GM12878 (cell line): ENCODE measurements at regions of chr11 and their contacts with region 1.

Region 1: DNA sequence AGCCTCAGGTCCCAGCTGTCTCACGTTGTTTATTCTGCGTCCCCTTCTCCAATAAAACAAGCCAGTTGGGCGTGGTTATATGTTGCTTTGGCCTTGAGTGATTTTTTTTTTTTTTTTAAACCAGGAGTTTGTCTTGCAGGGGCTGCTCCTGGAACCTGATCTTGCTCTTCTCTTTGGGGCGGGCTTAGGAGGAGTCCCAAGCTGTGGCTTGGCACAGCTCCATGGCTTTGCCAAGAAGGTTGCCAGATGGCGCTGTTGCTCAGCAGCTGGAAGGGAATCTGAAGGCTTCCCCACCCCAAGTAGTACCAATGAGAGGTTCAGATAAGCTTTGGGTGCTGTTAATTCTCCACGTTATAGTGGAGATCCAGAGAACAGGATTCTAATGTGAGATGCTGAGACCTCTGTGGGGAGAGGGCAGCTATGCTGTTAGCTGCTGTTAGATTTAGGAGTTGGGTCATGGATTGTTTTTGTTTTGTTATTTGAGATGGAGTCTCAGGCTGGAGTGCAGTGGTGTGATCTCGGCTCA is 2.0 kb upstream of the FERMT3 start:
- DNase-seq: peak; percentile 52
- ATAC-seq: peak; percentile 43
- H3K4me3 ChIP-seq: no peak overlapping the region
- H3K27ac ChIP-seq: peak overlapping the region; percentile 3; the same call in 1 of the 2 replicates
- H3K4me1 ChIP-seq: peaks cover 26% of the 10 kb centered on the region
- H3K27me3 ChIP-seq: no peaks in the 10 kb centered on the region
- CTCF ChIP-seq: peak; percentile 73 to 92 (median 77)
- EP300 ChIP-seq: no peak
- POLR2A ChIP-seq: peak; percentile 34; the same call in 1 of the 2 replicates
- RAD21 ChIP-seq: peak; percentile 82

Region 2: GRCh38 chr11:64216879-64217278 is 12.4 kb after region 1 on chr11:
- CTCF ChIA-PET with region 1: interaction called, 14 read pairs
- POLR2A ChIA-PET with region 1: interaction called, 21 read pairs
- RAD21 ChIA-PET with region 1: interaction called, 6 read pairs
- SMC1A ChIA-PET with region 1: interaction called, 8 read pairs
- in situ Hi-C with region 1: no loop called
- intact Hi-C with region 1: no loop called
- DNase-seq: no peak
- ATAC-seq: peak; percentile 25; the same call in 1 of the 3 replicates
- H3K4me3 ChIP-seq: no peak overlapping the region
- H3K27ac ChIP-seq: no peak overlapping the region
- H3K4me1 ChIP-seq: no peaks in the 10 kb centered on the region; the same call in 1 of the 2 replicates
- H3K27me3 ChIP-seq: no peaks in the 10 kb centered on the region
- CTCF ChIP-seq: no peak
- EP300 ChIP-seq: no peak
- POLR2A ChIP-seq: no peak
- RAD21 ChIP-seq: no peak

Region 3: GRCh38 chr11:64233913-64234834 is 29.6 kb after region 1 on chr11 and contains the start of gene VEGFB:
- CTCF ChIA-PET with region 1: interaction called, 18 read pairs
- POLR2A ChIA-PET with region 1: interaction called, 21 read pairs
- RAD21 ChIA-PET with region 1: interaction called, 6 read pairs
- SMC1A ChIA-PET with region 1: interaction called, 3 read pairs
- in situ Hi-C with region 1: no loop called
- intact Hi-C with region 1: no loop called
- DNase-seq: no peak
- ATAC-seq: peak; percentile 51
- H3K4me3 ChIP-seq: peak within 1 kb of the TSS; percentile 97
- H3K27ac ChIP-seq: 0 out of 2 replicates have a peak within 1 kb of the TSS, but pooled peaks have one; percentile 33
- H3K4me1 ChIP-seq: peaks cover 50% of the 10 kb centered on the region
- H3K27me3 ChIP-seq: no peaks in the 10 kb centered on the region
- CTCF ChIP-seq: no peak
- EP300 ChIP-seq: no peak
- POLR2A ChIP-seq: peak; percentile 45; the same call in 1 of the 2 replicates
- RAD21 ChIP-seq: no peak
- polyA plus RNA-seq, gene VEGFB: 7.0 to 28.1 TPM

Region 4: DNA sequence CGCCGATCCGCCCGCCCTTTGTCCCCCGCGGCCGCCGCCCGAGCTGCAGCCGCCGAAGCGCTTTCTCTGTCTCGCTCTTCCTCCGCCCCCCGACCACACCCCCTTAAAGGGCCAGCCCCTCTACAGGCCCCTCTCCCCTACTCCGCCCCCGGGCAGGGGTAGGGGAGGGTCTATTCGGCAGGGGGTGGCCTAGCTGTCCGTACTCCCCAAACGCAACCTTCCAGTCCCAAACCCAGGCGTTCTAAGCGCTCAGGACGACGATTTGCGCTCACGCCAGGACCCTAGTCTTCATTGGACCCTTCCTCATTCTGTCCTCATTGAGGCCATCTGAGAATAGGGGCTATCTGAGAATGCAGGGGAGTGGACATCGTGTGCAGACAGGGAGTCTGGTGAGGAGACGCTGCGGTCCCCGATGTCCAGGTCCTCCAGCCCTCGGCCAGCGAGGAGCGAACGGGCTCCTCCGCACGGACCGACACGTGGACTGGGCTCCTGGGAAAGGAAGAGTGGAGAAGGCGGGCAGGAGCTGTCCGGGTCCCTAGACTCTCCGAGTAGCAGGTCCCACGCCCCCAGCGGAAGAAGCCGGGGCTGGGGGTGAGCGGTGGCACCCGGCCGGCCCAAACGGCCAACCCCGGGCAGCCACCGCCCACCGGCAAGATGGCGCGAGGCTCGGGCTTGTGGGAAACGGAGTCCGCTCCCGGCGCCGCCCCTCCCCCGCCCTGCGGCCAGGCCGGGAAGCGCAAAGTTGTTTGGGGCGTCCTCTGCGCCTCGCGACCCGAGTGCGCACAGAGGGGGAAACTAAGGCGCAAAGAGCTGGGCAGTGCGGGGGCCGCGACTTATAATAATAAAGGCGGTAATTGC is 42.6 kb after region 1 on chr11 and contains the start of gene PPP1R14B:
- CTCF ChIA-PET with region 1: interaction called, 66 read pairs
- POLR2A ChIA-PET with region 1: interaction called, 82 read pairs
- RAD21 ChIA-PET with region 1: interaction called, 104 read pairs
- SMC1A ChIA-PET with region 1: interaction called, 40 read pairs
- in situ Hi-C with region 1: no loop called
- intact Hi-C with region 1: no loop called
- DNase-seq: no peak
- ATAC-seq: peak; percentile 75
- H3K4me3 ChIP-seq: peak within 1 kb of the TSS; percentile 91
- H3K27ac ChIP-seq: peak within 1 kb of the TSS; percentile 90
- H3K4me1 ChIP-seq: peaks cover 17% of the 10 kb centered on the region
- H3K27me3 ChIP-seq: no peaks in the 10 kb centered on the region
- CTCF ChIP-seq: 0 out of 6 replicates have a peak, but pooled peaks of 1 of the 3 experiments have one; percentile 6
- EP300 ChIP-seq: no peak
- POLR2A ChIP-seq: peak; percentile 13
- RAD21 ChIP-seq: no peak
- polyA plus RNA-seq, gene PPP1R14B: 8.4 to 27.7 TPM

Region 5: GRCh38 chr11:64284048-64284961 is 79.8 kb after region 1 on chr11 and contains the start of gene BAD:
- CTCF ChIA-PET with region 1: interaction called, 4 read pairs
- POLR2A ChIA-PET with region 1: interaction called, 17 read pairs
- RAD21 ChIA-PET with region 1: interaction called, 9 read pairs
- SMC1A ChIA-PET with region 1: interaction called, 5 read pairs
- in situ Hi-C with region 1: no loop called
- intact Hi-C with region 1: no loop called
- DNase-seq: no peak
- ATAC-seq: peak; percentile 94
- H3K4me3 ChIP-seq: peak within 1 kb of the TSS; percentile 86
- H3K27ac ChIP-seq: peak within 1 kb of the TSS; percentile 91
- H3K4me1 ChIP-seq: peaks cover 7% of the 10 kb centered on the region
- H3K27me3 ChIP-seq: no peaks in the 10 kb centered on the region
- CTCF ChIP-seq: no peak
- EP300 ChIP-seq: no peak; a peak in 1 of 4 replicates
- POLR2A ChIP-seq: peak; percentile 78
- RAD21 ChIP-seq: no peak
- polyA plus RNA-seq, gene BAD: 1.5 to 7.4 TPM

Region 6: DNA sequence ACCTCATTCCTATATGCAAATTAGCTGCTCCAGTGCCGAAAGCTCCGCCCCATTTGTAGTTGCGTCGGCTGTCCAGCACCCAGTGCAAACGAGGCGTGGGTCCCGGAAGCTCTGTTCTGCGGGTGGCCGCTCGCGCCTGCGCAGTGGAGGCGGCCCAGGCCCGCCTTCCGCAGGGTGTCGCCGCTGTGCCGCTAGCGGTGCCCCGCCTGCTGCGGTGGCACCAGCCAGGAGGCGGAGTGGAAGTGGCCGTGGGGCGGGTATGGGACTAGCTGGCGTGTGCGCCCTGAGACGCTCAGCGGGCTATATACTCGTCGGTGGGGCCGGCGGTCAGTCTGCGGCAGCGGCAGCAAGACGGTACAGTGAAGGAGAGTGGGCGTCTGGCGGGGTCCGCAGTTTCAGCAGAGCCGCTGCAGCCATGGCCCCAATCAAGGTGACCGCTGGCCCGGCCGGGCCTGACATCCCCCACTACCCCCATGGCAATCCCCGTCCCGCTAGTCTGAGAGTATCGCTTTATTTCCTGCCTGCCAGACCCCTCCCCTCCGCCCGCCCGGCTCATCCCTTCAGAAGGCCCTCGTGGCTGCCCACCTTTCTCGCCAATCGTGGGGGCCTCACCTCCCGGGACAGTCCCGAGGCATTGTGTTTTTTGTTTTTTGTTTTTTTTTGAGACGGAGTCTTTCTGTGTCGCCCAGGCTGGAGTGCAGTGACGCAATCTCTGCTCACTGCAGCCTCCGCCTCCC is 113.6 kb after region 1 on chr11 and contains the start of gene PRDX5:
- CTCF ChIA-PET with region 1: interaction called, 14 read pairs
- POLR2A ChIA-PET with region 1: interaction called, 10 read pairs
- RAD21 ChIA-PET with region 1: interaction called, 34 read pairs
- SMC1A ChIA-PET with region 1: interaction called, 7 read pairs
- in situ Hi-C with region 1: no loop called
- intact Hi-C with region 1: no loop called
- DNase-seq: peak; percentile 92
- ATAC-seq: peak; percentile 86
- H3K4me3 ChIP-seq: peak within 1 kb of the TSS; percentile 80
- H3K27ac ChIP-seq: peak within 1 kb of the TSS; percentile 99
- H3K4me1 ChIP-seq: peaks cover 9% of the 10 kb centered on the region
- H3K27me3 ChIP-seq: no peaks in the 10 kb centered on the region
- CTCF ChIP-seq: peak; percentile 41 to 91 (median 41); a peak in 5 of 6 replicates
- EP300 ChIP-seq: no peak
- POLR2A ChIP-seq: peak; percentile 86
- RAD21 ChIP-seq: peak; percentile 56; the same call in 1 of the 2 replicates
- polyA plus RNA-seq, gene PRDX5: 95.7 to 203 TPM

Region 7: DNA sequence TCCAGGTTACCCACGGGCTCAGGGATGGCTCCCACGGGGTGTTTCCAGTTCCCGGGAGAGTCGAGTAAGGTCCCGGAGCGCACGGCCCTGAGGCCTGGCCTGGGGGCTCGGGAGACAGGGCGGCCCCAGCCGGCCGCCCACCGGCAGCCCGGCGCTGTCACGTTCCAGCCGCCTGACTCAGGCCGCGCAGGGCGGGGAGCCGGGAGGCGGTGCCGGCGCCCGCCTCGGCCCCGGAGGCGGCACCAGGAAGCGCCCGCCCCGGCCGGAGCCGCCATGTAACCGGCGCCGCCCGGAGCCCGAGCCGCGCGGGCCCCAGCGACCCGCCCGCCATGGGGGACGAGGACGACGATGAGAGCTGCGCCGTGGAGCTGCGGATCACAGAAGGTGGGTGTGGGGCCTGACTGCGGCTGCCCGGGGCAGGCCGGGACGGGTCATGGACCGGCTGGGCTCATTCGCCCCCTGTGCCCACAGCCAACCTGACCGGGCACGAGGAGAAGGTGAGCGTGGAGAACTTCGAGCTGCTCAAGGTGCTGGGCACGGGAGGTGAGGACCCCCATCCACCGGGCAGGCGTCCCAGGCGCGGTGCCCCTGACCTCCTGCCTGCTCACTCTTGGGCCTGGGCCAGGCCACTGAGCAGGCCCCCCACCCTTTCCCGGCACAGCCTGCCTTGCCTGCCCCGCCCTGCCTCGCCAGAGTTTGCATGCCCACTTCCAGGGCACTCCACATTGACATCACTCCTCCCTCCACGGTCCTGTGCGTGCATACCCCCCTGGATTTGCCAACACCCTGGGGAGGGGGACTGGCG is 154.6 kb after region 1 on chr11 and contains the start of gene RPS6KA4:
- CTCF ChIA-PET with region 1: interaction called, 9 read pairs
- POLR2A ChIA-PET with region 1: interaction called, 3 read pairs
- RAD21 ChIA-PET with region 1: interaction called, 13 read pairs
- SMC1A ChIA-PET with region 1: interaction called, 7 read pairs
- in situ Hi-C with region 1: no loop called
- intact Hi-C with region 1: no loop called
- DNase-seq: no peak
- ATAC-seq: peak; percentile 85
- H3K4me3 ChIP-seq: peak within 1 kb of the TSS; percentile 69
- H3K27ac ChIP-seq: peak within 1 kb of the TSS; percentile 72
- H3K4me1 ChIP-seq: peaks cover 36% of the 10 kb centered on the region
- H3K27me3 ChIP-seq: no peaks in the 10 kb centered on the region
- CTCF ChIP-seq: no peak
- EP300 ChIP-seq: no peak
- POLR2A ChIP-seq: peak; percentile 82
- RAD21 ChIP-seq: no peak
- polyA plus RNA-seq, gene RPS6KA4: 0.34 to 0.73 TPM

Region 8: GRCh38 chr11:64409707-64410403 is 205.3 kb after region 1 on chr11:
- CTCF ChIA-PET with region 1: no interaction called
- POLR2A ChIA-PET with region 1: no interaction called
- RAD21 ChIA-PET with region 1: no interaction called
- SMC1A ChIA-PET with region 1: no interaction called
- in situ Hi-C with region 1: no loop called
- intact Hi-C with region 1: no loop called
- DNase-seq: no peak
- ATAC-seq: no peak
- H3K4me3 ChIP-seq: no peak overlapping the region
- H3K27ac ChIP-seq: no peak overlapping the region
- H3K4me1 ChIP-seq: no peaks in the 10 kb centered on the region
- H3K27me3 ChIP-seq: no peaks in the 10 kb centered on the region; a peak in 4 of 4 replicates
- CTCF ChIP-seq: no peak
- EP300 ChIP-seq: no peak
- POLR2A ChIP-seq: no peak
- RAD21 ChIP-seq: no peak

Region 9: DNA sequence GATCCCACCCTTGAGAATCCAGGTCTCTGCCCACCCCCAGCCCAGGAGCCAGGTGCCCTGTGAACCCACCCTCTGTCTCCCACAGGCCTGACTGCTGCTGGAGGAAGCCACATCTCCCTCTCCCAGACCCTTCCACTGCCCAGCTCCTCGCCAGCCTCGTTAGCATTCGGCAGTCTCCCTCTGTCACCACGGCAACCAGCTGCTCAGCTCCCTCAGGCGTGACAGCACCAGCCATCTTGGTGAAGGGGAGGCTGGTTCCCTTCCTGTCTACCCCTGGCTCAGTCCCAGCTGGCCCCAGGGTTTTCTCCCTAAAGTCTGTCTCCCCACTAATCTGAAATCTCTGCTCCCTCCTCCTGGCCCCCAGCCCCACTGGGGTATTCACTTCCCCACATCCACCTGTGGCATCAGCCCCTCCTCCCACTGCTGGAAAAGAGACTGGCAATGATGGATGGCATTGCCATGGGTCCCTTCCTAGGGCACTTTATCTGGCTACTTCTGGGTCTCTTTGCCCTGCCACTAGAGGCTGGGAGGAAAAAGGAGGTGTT is 490.4 kb after region 1 on chr11:
- CTCF ChIA-PET with region 1: no interaction called
- POLR2A ChIA-PET with region 1: no interaction called
- RAD21 ChIA-PET with region 1: no interaction called
- SMC1A ChIA-PET with region 1: no interaction called
- in situ Hi-C with region 1: no loop called
- intact Hi-C with region 1: no loop called
- DNase-seq: no peak
- ATAC-seq: peak; percentile 96
- H3K4me3 ChIP-seq: no peak overlapping the region
- H3K27ac ChIP-seq: no peak overlapping the region
- H3K4me1 ChIP-seq: 0 out of 2 replicates have a peak, but pooled peaks cover 3% of the 10 kb centered on the region
- H3K27me3 ChIP-seq: peaks cover 0 to 2% of the 10 kb centered on the region in 2 experiments
- CTCF ChIP-seq: no peak
- EP300 ChIP-seq: no peak
- POLR2A ChIP-seq: no peak
- RAD21 ChIP-seq: no peak